PC-3 (cell line): ENCODE measurements at regions of chr14 and their contacts with region 1.

Region 1: DNA sequence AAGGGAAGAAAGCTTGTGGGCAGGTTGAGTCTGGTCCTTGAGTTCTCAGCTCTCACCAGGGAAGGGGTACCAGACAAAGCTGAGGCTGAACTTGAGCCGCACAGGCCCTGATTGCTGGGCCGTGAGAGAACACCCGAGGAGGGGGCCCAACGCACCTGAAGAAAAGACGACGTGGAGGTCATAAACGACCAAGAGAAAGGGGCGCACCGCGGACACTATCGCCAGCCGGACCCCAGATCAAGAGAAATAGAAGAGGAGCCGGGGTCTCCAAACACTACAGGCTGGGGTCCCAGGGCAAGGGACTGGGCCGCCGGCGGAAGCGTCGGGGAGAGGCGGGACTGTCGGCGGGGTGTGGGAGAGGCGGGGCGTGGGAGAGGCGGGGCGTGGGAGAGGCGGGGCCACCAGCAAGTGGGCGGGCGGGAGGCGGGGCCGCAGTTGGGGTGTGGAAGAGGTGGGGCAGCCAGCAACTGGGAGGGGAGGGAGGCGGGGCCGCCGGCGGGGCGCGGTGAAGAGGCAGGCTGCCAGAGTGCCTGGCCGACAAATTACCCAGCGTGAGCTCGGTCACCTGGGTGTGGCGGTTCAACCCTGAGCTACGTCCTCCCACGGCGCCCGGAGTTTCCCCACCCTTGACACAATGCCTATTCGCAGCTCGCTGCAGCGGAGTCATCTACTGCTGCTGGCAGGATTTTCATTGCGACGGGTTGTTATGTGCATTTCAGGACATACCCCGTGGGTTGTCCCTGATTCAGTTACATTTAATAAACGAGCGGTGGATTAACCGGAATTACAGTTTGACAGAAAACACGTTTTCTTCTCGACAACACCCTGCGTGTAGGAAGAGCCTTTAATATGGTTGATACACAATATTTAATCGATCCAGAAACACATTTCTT is 15.5 kb upstream of the NEMF start:
- DNase-seq: peak; percentile 98
- ATAC-seq: peak; percentile 95
- H3K4me3 ChIP-seq: peak overlapping the region; percentile 71
- H3K27ac ChIP-seq: peak overlapping the region; percentile 67
- H3K4me1 ChIP-seq: peaks cover 33% of the 10 kb centered on the region
- H3K27me3 ChIP-seq: no peaks in the 10 kb centered on the region
- CTCF ChIP-seq: no peak

Region 2: GRCh38 chr14:49786315-49787110 is 81.6 kb before region 1 on chr14:
- CTCF ChIA-PET with region 1: no interaction called
- POLR2A ChIA-PET with region 1: interaction called, 10 read pairs
- intact Hi-C with region 1: no loop called
- DNase-seq: no peak
- ATAC-seq: no peak; the same call in 1 of the 2 replicates
- H3K4me3 ChIP-seq: no peak overlapping the region
- H3K27ac ChIP-seq: no peak overlapping the region
- H3K4me1 ChIP-seq: no peaks in the 10 kb centered on the region
- H3K27me3 ChIP-seq: no peaks in the 10 kb centered on the region
- CTCF ChIP-seq: peak; percentile 33; the same call in 1 of the 2 replicates

Region 3: GRCh38 chr14:49808780-49809179 is 59.3 kb before region 1 on chr14:
- CTCF ChIA-PET with region 1: no interaction called
- POLR2A ChIA-PET with region 1: no interaction called
- intact Hi-C with region 1: no loop called
- DNase-seq: no peak
- ATAC-seq: no peak
- H3K4me3 ChIP-seq: no peak overlapping the region
- H3K27ac ChIP-seq: no peak overlapping the region
- H3K4me1 ChIP-seq: no peaks in the 10 kb centered on the region
- H3K27me3 ChIP-seq: no peaks in the 10 kb centered on the region
- CTCF ChIP-seq: no peak

Region 4: DNA sequence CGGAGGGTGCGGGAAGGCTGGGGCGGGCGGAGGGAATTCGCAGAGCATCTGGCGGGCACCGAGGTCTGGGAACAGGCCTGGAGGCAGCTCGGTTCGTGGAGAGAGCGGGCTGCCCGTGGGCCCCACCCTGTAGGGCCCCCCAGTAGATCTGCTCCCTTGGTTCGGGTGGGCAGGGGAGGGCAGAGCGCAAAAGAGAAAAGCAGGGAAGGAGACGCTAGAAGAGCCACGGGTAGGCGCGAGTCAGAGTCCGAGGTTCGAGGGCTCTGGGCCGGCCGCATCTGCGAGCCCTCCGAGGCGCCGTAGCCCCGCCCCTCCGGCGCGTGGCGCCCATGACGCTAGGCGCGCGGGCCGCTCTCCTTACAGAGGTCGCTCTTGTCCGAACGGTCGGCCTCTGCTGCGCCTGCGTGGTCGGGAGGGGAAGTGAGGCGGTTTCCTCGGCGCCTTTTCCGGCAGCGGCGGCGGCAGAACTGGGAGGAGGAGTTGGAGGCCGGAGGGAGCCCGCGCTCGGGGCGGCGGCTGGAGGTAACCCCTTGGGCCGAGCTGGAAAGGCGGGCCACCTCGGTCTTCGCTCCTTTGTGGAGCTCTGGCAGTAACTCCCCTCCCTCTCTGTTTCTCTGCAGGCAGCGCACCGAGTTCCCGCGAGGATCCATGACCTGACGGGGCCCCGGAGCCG is 24.7 kb after region 1 on chr14 and contains the start of gene ARF6:
- CTCF ChIA-PET with region 1: interaction called, 3 read pairs
- POLR2A ChIA-PET with region 1: interaction called, 8 read pairs
- intact Hi-C with region 1: loop called (anchors 1 kb)
- DNase-seq: peak; percentile 99
- ATAC-seq: peak; percentile 81
- H3K4me3 ChIP-seq: peak within 1 kb of the TSS; percentile 91
- H3K27ac ChIP-seq: peak within 1 kb of the TSS; percentile 94
- H3K4me1 ChIP-seq: peaks cover 24% of the 10 kb centered on the region
- H3K27me3 ChIP-seq: no peaks in the 10 kb centered on the region
- CTCF ChIP-seq: no peak
- total RNA-seq, gene ARF6: 86.4 and 107 TPM in 2 replicates

Region 5: GRCh38 chr14:49934646-49935045 is 66.6 kb after region 1 on chr14:
- CTCF ChIA-PET with region 1: no interaction called
- POLR2A ChIA-PET with region 1: no interaction called
- intact Hi-C with region 1: no loop called
- DNase-seq: no peak
- ATAC-seq: no peak; the same call in 1 of the 2 replicates
- H3K4me3 ChIP-seq: no peak overlapping the region
- H3K27ac ChIP-seq: no peak overlapping the region
- H3K4me1 ChIP-seq: no peaks in the 10 kb centered on the region
- H3K27me3 ChIP-seq: no peaks in the 10 kb centered on the region
- CTCF ChIP-seq: no peak

Region 6: GRCh38 chr14:50060871-50061663 is 193.0 kb after region 1 on chr14:
- CTCF ChIA-PET with region 1: interaction called, 5 read pairs
- POLR2A ChIA-PET with region 1: interaction called, 10 read pairs
- intact Hi-C with region 1: loop called (anchors 5 kb)
- DNase-seq: peak; percentile 88
- ATAC-seq: peak; percentile 66
- H3K4me3 ChIP-seq: no peak overlapping the region
- H3K27ac ChIP-seq: peak overlapping the region; percentile 96
- H3K4me1 ChIP-seq: peaks cover 38% of the 10 kb centered on the region
- H3K27me3 ChIP-seq: no peaks in the 10 kb centered on the region
- CTCF ChIP-seq: peak; percentile 33; the same call in 1 of the 2 replicates

Region 7: GRCh38 chr14:50109342-50109741 is 241.3 kb after region 1 on chr14:
- CTCF ChIA-PET with region 1: interaction called, 12 read pairs
- POLR2A ChIA-PET with region 1: no interaction called
- intact Hi-C with region 1: loop called (anchors 1 kb)
- DNase-seq: peak; percentile 38
- ATAC-seq: peak; percentile 16; the same call in 1 of the 2 replicates
- H3K4me3 ChIP-seq: no peak overlapping the region
- H3K27ac ChIP-seq: no peak overlapping the region
- H3K4me1 ChIP-seq: peaks cover 10% of the 10 kb centered on the region
- H3K27me3 ChIP-seq: no peaks in the 10 kb centered on the region
- CTCF ChIP-seq: peak; percentile 62